GM13976 (cell line): ENCODE measurements at regions of chr12 and their contacts with region 1.

Region 1: DNA sequence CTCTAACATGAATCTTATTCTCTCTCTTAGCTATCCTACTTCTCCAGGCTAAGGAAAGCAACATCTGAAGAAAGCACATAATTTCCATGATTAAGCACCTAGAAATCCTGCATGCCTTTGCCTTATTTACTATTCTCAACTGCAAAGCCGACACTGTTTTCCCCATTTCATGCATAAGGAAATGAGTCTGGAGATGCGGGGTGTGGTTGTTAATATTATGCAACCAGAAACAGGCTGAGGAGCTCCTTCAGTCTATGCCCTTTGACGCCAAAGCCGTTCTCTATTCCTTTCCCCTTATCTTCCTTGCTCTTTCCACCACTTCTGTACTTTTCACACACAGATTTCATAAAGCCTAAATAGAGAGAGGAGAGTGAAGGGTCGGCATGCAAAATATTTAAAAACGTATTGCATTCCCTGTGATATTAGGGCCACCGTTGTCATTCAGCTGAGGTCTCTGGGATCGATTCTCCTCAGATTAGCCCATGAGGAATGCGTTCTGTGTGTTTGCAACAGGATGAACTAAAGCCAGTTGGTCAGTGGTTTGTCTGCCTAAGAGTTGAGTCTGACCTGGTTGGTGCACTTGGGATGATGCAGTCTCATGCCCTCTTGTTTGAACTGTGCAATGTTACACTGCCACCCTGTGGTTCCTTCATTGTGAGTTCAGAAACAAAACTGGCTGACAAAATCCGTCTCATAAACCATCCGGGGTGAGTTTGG is 53.1 kb upstream of the PLEKHG7 start:
- DNase-seq: peak; percentile 63
- CTCF ChIP-seq: peak; percentile 48

Region 2: GRCh38 chr12:91397866-91398532 is 1251.7 kb before region 1 on chr12:
- in situ Hi-C with region 1: loop called (anchors 10 kb)
- DNase-seq: no peak
- CTCF ChIP-seq: no peak

Region 3: GRCh38 chr12:93042283-93042682 is 392.6 kb after region 1 on chr12:
- in situ Hi-C with region 1: no loop called
- DNase-seq: no peak
- CTCF ChIP-seq: no peak